Dorsolateral prefrontal cortex (tissue), 120 donors: ENCODE measurements at regions of chr18 and their contacts with region 1.

Region 1: GRCh38 chr18:26804519-26804918 is 61.0 kb downstream of the AQP4 start:
- DNase-seq: peak in 5 of 10 donors; percentile 14 to 47 (median 21)
- H3K4me3 ChIP-seq: no peak overlapping the region
- H3K27ac ChIP-seq: no peak overlapping the region
- H3K27me3 ChIP-seq: no peaks in the 10 kb centered on the region
- CTCF ChIP-seq: peak in 52 of 56 donors; percentile 21 to 67 (median 47)

Region 2: GRCh38 chr18:26370037-26370436 is 434.5 kb before region 1 on chr18:
- intact Hi-C with region 1: no loop called
- DNase-seq: no peak
- H3K4me3 ChIP-seq: no peak overlapping the region
- H3K27ac ChIP-seq: no peak overlapping the region
- H3K27me3 ChIP-seq: no peaks in the 10 kb centered on the region
- CTCF ChIP-seq: no peak

Region 3: GRCh38 chr18:26963292-26963691 is 158.8 kb after region 1 on chr18:
- intact Hi-C with region 1: loop called in 1 of 2 experiments (anchors 10 kb)
- DNase-seq: no peak
- H3K4me3 ChIP-seq: no peak overlapping the region
- H3K27ac ChIP-seq: peak overlapping the region in 3 of 59 donors; percentile 10 to 61 (median 27)
- H3K27me3 ChIP-seq: no peaks in the 10 kb centered on the region
- CTCF ChIP-seq: peak in 48 of 56 donors; percentile 12 to 70 (median 42)

Region 4: DNA sequence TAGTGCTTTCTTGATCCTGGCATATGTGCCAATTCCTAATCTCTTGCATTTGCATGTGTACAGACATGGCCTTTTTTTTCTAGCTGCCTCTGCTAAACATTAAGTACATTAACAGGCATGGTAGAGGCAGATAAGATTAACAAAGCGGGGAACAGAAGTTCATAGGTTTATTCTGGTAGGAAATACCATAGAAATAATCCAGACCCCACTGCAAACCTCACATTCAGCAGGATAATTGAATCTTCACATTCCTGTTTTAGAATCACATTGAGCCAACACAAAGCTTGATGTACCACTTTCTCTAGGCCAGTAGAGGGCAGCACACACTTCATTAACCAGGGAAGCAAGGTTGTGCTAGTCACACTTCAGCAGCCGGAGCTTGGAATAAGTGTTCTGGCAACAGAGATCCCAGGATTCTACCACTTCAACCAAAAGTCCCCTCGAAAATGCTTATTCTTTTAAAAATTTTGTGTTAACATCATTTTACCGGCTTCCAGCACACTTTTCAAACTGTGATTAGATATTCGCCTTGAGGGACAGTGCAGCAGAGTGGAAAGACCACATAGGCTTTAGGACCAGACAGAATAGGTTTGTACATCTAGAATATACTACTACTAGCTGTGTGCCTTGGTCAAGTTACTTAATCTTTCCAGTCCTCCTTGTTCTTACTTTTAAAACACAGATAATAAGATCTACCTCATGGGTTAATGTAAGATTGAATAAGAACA is 800.8 kb after region 1 on chr18:
- intact Hi-C with region 1: loop called in 1 of 2 experiments (anchors 10 kb)
- DNase-seq: peak in 9 of 10 donors; percentile 50 to 81 (median 63)
- H3K4me3 ChIP-seq: no peak overlapping the region
- H3K27ac ChIP-seq: peak overlapping the region in 1 of 59 donors; percentile 10
- H3K27me3 ChIP-seq: no peaks in the 10 kb centered on the region
- CTCF ChIP-seq: peak; percentile 62 to 94 (median 88)